HCT116 (cell line): ENCODE measurements at regions of chr4 and their contacts with region 1.

Region 1: GRCh38 chr4:161564230-161564834 is 599.5 kb downstream of the FSTL5 start:
- DNase-seq: no peak
- ATAC-seq: no peak
- H3K4me3 ChIP-seq: no peak overlapping the region
- H3K27ac ChIP-seq: no peak overlapping the region
- H3K4me1 ChIP-seq: peaks cover 0 to 5% of the 10 kb centered on the region in 2 experiments; a peak in 1 of 4 replicates
- H3K27me3 ChIP-seq: no peaks in the 10 kb centered on the region
- CTCF ChIP-seq: peak in 1 of 3 experiments; percentile 22; a peak in 2 of 6 replicates
- POLR2A ChIP-seq: no peak
- RAD21 ChIP-seq: peak; percentile 38

Region 2: DNA sequence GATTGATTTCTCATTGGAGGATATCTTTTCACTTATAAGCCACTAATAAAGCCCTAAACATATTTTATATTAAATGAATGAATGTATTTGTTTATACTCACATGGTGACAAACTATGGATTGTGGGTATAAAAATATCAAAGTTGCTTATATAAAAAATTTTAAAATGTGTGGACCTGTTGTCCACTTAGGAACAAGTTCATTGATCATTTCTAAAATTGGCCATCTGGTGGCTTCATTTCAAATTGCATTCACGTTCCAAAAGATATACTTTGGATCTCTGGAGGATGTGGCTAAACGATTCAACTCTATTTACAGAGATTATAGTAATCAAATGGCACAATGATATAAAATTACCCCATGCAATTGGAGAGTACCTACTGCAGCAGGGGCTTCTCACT is 566.9 kb after region 1 on chr4:
- CTCF ChIA-PET with region 1: no interaction called
- POLR2A ChIA-PET with region 1: no interaction called
- RAD21 ChIA-PET with region 1: no interaction called
- intact Hi-C with region 1: loop called (anchors 5 kb)
- DNase-seq: no peak
- ATAC-seq: peak; percentile 67
- H3K4me3 ChIP-seq: no peak overlapping the region
- H3K27ac ChIP-seq: no peak overlapping the region
- H3K4me1 ChIP-seq: no peaks in the 10 kb centered on the region
- H3K27me3 ChIP-seq: no peaks in the 10 kb centered on the region
- CTCF ChIP-seq: peak in 2 of 3 experiments; percentile 32 to 43; a peak in 3 of 6 replicates
- POLR2A ChIP-seq: no peak
- RAD21 ChIP-seq: peak; percentile 29; the same call in 1 of the 2 replicates

Region 3: DNA sequence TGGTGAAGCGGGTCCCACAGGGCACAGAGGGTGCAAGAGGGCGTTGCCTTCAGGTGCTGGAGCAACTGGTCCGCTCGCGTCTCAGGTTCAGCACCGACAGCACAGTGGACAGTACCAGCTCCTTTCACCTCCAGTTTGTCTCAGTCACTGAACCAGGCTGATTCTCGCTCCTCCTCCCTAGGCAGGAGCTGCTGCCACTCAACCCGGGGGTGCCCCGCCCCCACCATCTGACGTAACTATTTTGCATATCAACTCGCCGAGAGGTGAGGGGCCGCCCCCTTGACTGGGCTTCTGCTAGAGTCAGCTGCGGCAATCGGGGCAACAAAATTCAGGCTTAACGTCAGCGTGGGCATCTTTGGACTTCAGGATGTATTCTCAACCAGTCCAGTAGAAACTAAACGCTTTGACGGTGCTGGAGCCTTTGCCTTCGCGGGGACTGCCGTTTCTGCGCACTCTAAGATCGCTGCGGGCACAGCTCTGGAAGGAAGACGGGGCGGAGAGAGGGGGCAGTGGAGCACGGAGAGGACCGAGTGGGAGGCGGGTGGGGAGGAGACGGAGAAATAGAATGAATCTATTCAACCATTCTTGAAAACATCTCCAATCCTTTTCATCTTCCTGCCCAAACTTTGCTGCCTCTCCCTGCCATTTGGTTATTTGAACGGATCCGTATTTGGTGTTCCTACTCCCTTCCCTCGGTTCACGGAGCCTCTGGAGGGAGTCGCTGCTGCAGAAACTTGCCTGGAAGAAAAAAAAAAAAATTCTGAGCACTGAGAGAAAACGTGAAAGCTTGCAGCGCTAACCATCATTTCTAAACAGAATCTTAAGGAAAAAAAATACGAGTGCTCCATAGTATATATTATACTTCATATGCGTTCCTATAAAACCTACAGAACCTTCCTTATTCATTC is 599.8 kb after region 1 on chr4 and contains the start of gene FSTL5:
- CTCF ChIA-PET with region 1: no interaction called
- POLR2A ChIA-PET with region 1: no interaction called
- RAD21 ChIA-PET with region 1: no interaction called
- intact Hi-C with region 1: loop called (anchors 5 kb)
- DNase-seq: no peak
- ATAC-seq: no peak
- H3K4me3 ChIP-seq: no peak within 1 kb of the TSS
- H3K27ac ChIP-seq: no peak within 1 kb of the TSS
- H3K4me1 ChIP-seq: peaks cover 4 to 10% of the 10 kb centered on the region in 2 experiments; a peak in 2 of 4 replicates
- H3K27me3 ChIP-seq: no peaks in the 10 kb centered on the region
- CTCF ChIP-seq: no peak
- POLR2A ChIP-seq: no peak
- RAD21 ChIP-seq: no peak
- total RNA-seq, gene FSTL5: not detected